Right ventricle myocardium superior (tissue), 1 donor: ENCODE measurements at regions of chr9 and their contacts with region 1.

Region 1: GRCh38 chr9:2494562-2494961 is 127.0 kb upstream of the VLDLR start:
- DNase-seq: no peak
- ATAC-seq: no peak

Region 2: DNA sequence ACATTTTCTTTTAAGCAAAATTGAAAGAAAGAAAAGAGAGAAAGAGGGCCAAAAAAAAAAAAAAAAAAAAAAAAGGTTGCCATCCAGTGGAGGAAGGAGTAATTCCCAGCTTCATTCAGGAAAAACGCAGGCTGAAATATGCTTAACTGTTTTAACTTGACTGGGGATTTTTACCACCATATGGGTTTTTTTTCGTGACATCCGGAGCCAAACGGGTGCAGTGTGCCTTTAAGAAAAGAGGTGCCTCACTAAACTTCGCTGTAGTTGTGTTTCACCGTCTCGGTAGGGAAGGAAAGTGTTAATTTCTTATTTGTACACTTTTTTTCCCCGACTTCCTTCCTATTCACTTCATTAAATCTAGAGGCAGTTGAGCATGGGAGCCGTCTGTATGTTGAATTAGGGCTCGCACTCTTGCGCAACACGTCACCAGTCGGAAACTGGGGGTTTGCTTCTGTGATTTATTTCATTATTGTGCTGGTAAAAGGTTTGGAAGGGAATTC is 336.4 kb before region 1 on chr9:
- intact Hi-C with region 1: no loop called
- DNase-seq: peak; percentile 70
- ATAC-seq: peak; percentile 53

Region 3: GRCh38 chr9:2181792-2182191 is 312.8 kb before region 1 on chr9:
- intact Hi-C with region 1: no loop called
- DNase-seq: no peak
- ATAC-seq: no peak

Region 4: DNA sequence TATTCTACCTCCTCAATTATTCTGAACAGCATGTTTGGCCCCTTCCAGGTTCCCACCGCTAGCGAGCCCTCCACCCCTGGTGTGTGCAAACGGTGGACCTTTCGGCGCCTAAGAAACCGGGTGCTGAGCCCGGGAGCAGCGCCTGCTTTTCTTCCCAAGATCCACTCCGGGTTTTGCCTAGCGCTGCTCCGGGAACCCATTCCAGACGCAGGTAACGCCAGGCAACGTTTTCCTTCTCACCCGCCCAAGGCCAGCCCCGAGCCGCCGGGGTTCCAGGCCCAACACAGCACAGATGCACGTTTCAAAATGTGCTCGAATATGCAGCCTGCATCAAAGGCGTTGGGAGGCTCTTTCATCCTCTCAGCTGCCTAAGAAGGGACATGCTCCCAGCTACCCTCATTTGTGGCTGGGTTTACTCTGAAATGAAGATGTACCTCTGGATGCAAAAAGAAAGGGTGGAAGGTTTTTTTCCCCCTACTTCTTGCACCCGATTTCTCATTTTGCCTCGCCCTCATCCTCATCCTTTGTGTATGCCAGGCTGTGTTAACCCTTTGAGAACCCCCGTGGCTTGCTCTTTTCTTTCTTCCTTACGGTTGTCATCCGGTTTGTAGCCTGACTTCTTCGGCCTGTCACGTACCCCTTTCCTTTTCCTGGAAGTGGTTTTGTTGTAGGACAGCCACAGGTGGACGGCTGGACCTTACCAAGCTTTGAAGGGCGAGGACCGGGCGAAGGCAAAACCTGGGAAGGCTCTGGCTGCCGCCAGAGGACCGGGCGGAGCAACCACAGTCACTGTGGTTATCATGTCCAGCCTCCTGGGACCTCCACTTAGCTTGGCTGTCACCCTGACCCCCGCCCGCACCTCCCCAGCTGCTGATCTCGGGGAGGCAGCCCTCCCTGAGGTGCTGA is 252.5 kb before region 1 on chr9:
- intact Hi-C with region 1: loop called (anchors 5 kb)
- DNase-seq: peak; percentile 87
- ATAC-seq: peak; percentile 97

Region 5: GRCh38 chr9:2395814-2396612 is 98.5 kb before region 1 on chr9:
- intact Hi-C with region 1: no loop called
- DNase-seq: no peak
- ATAC-seq: no peak

Region 6: DNA sequence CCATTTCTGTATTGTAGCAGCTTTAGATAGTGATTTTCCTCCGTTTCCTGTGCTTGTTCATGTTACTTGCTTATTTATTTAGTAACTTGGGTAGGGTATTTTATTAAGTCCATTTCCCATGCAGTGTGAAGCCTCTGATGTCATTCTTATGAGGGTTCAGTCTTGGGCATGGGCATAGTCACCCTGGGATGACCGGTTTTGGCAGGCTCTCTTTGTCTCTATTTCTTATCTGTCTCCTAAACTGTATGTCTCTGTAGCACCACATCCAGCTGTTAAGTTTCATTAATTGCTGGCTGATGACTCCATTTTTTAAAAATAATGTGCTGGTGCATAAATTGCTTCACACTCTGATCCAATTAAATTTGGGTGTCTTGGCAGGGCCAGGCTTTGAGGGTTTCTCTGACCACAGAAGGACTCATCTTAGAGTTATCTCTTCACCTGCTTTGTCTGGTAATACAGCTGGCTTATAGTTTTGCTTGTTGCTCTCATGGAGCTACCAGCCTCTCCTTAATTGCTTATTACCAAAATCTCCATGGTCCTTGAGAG is 46.3 kb before region 1 on chr9:
- intact Hi-C with region 1: no loop called
- DNase-seq: no peak
- ATAC-seq: no peak

Region 7: DNA sequence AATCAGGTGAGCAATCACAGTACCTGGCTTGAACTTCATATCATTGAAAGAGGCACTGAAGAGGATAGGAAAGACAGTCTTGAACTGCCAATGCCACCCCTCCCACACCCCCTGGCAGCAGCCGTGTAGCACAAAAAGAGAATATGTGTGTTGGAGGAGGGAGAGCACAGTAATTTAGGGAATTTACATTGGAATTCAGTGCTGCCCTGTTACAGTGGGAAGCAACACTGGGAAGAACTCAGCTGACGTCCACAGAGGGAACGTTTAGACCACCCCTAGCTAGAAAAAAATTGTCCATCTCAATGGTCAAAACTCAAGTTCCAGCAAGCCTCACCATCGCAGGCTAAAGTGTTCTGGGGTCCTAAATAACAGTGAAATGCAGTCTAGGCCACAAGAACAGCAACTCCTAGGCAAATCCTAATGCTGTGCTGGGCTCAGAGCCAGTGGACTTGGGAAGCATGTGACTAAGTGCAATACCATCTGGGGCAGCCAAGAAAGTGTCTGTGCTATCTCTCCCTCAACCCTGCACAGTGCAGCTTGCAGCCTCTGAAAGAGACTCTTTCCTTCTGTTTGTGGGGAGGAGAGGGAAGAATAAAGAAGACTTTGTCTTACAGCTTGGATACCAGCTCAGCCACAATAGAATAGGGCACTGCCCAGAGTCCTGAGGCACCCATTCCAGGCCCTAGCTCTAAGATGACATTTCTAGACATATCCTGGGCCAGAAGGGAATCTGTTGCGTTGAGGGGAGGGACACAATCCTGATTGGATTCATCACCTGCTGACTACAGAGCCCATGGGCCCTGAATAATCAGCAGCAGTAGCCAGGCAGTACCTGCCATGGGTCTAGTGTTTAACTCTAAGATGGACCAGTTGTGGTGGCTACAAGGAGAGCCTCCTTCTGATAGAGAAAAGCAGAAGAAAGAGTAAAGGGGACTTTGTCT is 64.9 kb after region 1 on chr9:
- intact Hi-C with region 1: loop called (anchors 10 kb)
- DNase-seq: peak; percentile 88
- ATAC-seq: peak; percentile 98